HCT116 (cell line): ENCODE measurements at regions of chr18 and their contacts with region 1.

Region 1: GRCh38 chr18:30582078-30582477 is 460.5 kb downstream of the DSC3 start:
- DNase-seq: no peak
- ATAC-seq: no peak
- H3K4me3 ChIP-seq: no peak overlapping the region
- H3K27ac ChIP-seq: no peak overlapping the region
- H3K4me1 ChIP-seq: no peaks in the 10 kb centered on the region
- H3K27me3 ChIP-seq: no peaks in the 10 kb centered on the region
- CTCF ChIP-seq: no peak
- POLR2A ChIP-seq: no peak
- RAD21 ChIP-seq: no peak

Region 2: DNA sequence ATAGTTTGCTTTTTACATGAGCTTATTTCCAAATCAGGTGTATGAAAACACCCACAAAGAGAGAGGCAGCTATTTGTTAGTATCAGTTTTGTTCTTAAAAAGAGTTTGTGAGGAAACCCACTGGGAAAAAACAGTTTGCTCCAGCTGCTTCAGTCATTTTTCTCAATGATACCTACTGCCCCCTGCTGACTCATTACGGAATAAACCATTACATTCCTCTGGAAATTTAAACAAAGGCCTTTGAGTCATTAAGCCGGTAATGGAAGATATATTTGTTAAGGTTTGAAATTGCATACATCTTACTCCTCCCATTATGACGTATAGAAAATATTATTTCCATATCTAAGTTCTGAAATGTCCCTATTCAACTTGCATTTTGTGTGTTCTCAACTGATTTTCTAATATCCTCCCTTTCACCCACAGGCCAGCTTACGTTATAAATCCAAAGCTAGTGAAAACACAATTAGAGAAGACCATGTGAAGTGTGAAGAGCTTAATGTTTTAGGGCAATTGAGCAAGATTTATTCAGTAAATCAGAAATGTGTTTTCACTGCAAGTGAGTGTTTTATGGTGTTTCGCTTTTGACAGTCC is 301.1 kb before region 1 on chr18:
- CTCF ChIA-PET with region 1: no interaction called
- POLR2A ChIA-PET with region 1: no interaction called
- RAD21 ChIA-PET with region 1: no interaction called
- intact Hi-C with region 1: no loop called
- DNase-seq: peak; percentile 34
- ATAC-seq: no peak
- H3K4me3 ChIP-seq: no peak overlapping the region
- H3K27ac ChIP-seq: no peak overlapping the region
- H3K4me1 ChIP-seq: no peaks in the 10 kb centered on the region
- H3K27me3 ChIP-seq: no peaks in the 10 kb centered on the region
- CTCF ChIP-seq: peak; percentile 12 to 73 (median 60); a peak in 5 of 6 replicates
- POLR2A ChIP-seq: no peak
- RAD21 ChIP-seq: peak; percentile 38; the same call in 1 of the 2 replicates

Region 3: GRCh38 chr18:30527226-30527625 is 54.9 kb before region 1 on chr18:
- CTCF ChIA-PET with region 1: no interaction called
- POLR2A ChIA-PET with region 1: no interaction called
- RAD21 ChIA-PET with region 1: no interaction called
- intact Hi-C with region 1: loop called (anchors 10 kb)
- DNase-seq: no peak
- ATAC-seq: no peak
- H3K4me3 ChIP-seq: no peak overlapping the region
- H3K27ac ChIP-seq: no peak overlapping the region
- H3K4me1 ChIP-seq: no peaks in the 10 kb centered on the region
- H3K27me3 ChIP-seq: no peaks in the 10 kb centered on the region
- CTCF ChIP-seq: no peak
- POLR2A ChIP-seq: no peak
- RAD21 ChIP-seq: no peak

Region 4: GRCh38 chr18:30595942-30596341 is 13.9 kb after region 1 on chr18:
- CTCF ChIA-PET with region 1: no interaction called
- POLR2A ChIA-PET with region 1: no interaction called
- RAD21 ChIA-PET with region 1: no interaction called
- intact Hi-C with region 1: no loop called
- DNase-seq: no peak
- ATAC-seq: no peak
- H3K4me3 ChIP-seq: no peak overlapping the region
- H3K27ac ChIP-seq: no peak overlapping the region
- H3K4me1 ChIP-seq: no peaks in the 10 kb centered on the region
- H3K27me3 ChIP-seq: no peaks in the 10 kb centered on the region
- CTCF ChIP-seq: no peak
- POLR2A ChIP-seq: no peak
- RAD21 ChIP-seq: no peak